ENCODE measurements at regions of chr20 and their contacts with region 1.

Region 1: DNA sequence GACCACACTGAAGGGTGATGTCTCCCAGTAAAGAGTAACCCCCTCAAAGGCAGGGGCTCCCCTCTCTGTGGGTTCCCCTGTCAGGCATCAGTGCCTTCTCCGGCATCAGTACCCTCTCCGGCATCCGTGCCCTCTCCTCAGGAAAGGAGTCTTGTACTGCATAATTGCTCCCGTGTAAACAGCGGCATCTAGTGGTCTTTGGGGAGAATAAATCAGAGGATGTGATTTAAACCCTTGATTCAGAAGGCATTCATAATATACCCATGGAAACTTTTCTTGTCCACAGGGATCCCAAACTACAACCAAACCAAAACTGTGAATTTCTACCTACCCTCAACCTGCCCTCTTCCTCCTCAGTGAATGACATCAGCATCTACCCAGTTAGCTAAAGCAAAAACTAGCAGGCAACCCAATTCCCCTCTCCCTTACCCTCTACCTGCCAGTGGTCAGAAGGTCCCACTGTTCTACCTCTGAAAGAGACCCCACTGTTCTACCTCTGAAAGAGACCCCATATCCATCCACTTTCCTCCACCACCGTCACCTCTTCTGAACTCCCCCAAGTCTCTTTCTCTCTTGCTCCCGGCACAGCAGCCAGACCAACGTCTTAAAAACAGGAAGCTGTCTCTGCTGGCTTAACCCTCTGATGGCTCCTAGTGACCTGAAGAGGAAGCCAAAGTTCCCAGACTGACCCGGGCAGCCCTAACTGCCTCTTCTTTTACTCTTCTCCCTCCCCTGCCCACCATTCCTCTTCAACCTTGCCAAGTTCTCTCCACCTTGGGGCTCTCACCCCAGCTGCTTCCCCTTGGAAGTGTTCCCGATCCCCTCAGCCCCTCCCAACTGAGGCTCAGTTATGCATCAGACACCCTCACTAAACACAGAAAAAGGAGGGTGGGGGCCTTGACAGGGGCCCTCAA is 27.2 kb downstream of the UBE2V1 start:
- DNase-seq: no peak
- H3K4me3 ChIP-seq: no peak overlapping the region
- H3K27me3 ChIP-seq: no peaks in the 10 kb centered on the region
- CTCF ChIP-seq: peak; percentile 84

Region 2: DNA sequence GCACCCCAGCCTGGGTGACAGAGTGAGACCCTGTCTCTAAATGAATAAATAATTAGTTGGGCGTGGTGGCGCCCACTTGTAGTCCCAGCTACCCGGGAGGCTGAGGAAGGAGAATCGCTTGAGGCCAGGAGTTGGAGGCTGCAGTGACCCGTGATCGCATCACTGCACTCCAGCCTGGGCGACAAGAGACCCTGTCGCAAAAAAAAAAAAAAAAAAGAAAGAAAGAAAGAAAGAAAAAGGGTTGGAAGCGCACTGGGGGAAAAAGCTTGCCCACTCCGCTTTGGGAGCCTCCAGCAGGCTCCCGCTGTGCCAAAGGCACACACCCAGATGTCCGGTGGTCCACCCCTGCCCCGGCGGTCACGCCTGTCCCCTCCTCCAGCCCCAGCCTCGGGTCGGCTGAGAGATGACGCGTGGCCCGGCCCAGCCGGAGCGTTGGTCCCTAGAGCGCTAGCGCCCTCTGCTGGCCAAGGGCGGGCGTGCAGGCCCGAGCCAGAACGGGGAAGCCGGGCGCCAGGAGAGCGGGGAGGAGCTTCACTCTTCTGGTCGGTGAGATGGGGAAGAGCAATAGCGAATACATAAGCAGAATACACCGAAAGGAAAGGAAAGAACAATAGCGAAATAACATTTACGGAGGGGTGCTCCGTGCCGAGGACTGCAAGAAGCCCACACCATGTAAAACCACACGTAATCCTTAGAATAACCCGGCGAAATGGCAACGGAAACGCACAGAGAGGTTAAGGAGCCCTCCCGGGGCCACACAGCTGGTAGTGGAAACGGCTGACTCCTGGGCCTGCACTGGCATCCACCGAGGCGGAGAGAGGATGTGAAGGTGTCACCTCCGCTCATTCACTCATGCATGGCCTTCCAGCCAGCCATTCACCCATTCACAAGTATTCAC is 14.5 kb before region 1 on chr20:
- CTCF ChIA-PET with region 1: interaction called, 43 read pairs
- POLR2A ChIA-PET with region 1: no interaction called
- DNase-seq: no peak
- H3K4me3 ChIP-seq: peak overlapping the region; percentile 30
- H3K27me3 ChIP-seq: no peaks in the 10 kb centered on the region
- CTCF ChIP-seq: peak; percentile 99

Region 3: DNA sequence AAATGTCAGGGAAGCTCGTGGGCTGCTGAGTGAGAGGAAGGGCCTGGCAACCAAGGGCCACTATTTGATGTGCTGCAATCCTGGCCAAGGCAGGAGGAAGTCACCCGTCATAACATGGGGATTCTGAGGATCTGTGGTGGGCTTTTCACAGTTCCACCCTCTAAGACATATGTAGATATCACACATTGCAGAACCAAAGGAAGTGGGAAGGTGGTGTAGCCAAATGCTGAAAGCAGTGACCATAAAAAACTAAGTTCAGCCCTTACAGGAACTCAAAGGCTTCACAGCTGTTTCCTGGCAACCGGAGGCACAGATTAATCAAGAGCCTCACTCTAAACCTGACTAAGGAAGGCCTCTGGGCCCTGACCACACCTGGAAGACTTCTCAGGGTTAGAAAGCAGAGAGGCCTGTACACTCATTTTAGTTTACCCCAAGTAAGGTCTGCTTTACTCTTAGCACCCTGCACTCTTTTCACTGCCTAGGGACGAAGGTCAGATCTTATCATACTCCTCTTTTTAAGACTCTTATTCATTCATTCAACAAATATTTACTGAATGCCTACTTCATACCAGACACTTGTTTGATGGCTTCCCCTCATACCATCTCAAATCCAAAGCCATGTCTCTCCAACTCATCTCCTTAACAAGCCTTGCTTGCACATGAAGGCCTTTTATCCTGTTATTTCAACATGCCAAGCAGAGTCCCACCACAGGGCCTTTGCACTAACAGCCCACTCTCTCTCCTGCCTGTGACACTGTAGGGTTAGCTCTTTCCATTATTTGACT is 24.6 kb after region 1 on chr20:
- CTCF ChIA-PET with region 1: interaction called, 12 read pairs
- POLR2A ChIA-PET with region 1: no interaction called
- DNase-seq: peak; percentile 33
- H3K4me3 ChIP-seq: no peak overlapping the region
- H3K27me3 ChIP-seq: no peaks in the 10 kb centered on the region
- CTCF ChIP-seq: no peak

Region 4: DNA sequence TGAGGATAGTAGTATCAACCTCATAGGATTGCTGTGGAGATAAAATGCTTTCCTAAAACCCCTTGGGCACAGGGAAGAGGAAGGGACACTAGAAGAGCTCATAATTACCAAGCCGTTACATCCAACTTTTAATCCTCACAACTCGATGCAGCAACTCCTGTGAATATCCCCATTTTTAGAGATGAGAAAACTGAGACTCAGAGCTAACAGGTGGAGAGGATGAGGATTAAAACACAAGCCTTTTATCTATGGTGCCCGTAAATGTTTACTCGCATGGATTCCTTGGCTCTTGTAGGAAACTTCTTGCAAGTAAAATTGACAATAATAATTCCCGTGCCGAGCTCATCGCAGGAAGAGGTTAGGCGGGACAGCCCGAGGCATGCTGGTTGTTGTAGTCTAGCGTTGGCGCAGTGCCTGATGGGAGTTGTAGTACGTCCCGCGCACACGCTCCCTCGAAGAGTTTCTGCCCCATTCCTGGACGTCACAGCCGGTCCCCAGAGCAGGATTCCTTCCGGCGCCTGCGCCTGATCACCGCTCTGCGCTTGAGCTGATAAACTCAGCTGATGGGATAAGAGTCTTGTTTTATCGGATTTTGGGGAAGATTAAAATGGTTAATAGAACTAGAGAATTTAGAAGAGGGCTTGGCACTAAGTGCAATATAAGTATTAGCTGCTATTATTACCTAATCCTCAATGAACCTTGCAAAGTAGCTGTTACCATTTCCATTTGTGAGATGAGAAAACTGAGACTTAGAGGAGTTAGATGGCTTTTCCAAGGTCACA is 30.1 kb after region 1 on chr20:
- CTCF ChIA-PET with region 1: interaction called, 12 read pairs
- POLR2A ChIA-PET with region 1: no interaction called
- DNase-seq: peak; percentile 82
- H3K4me3 ChIP-seq: peak overlapping the region; percentile 47
- H3K27me3 ChIP-seq: no peaks in the 10 kb centered on the region
- CTCF ChIP-seq: no peak

Region 5: DNA sequence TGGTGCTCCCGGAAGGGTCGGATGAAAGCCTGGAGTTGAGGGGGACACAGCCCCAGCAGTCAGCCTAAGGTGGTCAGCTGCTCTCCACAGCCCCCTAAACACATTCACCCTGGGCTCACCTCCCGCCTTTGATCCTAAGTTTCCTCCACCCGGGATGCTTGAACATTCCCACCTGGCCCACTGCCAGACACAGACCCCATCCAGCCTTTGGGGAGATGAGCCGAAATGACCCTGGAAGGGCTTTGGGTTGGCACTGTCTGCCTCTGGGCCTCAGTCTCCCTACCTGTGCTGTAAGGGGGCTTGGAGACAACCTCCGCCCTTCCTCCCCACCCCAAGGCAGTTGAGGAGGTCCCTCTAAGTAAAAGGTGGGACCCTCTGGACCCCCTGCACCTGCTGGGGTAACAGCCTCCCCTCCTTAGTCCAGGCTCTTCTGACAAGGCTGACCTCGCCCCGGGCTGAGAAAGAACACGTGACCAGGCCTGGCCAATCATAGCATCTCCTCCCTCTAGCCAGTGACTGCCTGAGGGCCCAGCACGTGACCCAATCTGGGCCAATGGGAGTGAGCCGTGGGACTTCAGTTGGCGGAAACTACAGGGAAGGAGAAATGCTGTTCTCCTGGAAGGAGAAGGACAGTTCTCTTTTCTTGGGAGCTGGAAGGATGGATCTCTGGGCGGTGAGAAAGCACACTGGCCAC is 44.1 kb after region 1 on chr20:
- CTCF ChIA-PET with region 1: no interaction called
- POLR2A ChIA-PET with region 1: no interaction called
- DNase-seq: no peak
- H3K4me3 ChIP-seq: no peak overlapping the region
- H3K27me3 ChIP-seq: no peaks in the 10 kb centered on the region
- CTCF ChIP-seq: no peak

Region 6: GRCh38 chr20:50625986-50626677 is 540.4 kb after region 1 on chr20:
- CTCF ChIA-PET with region 1: no interaction called
- POLR2A ChIA-PET with region 1: no interaction called
- DNase-seq: no peak
- H3K4me3 ChIP-seq: no peak overlapping the region
- H3K27me3 ChIP-seq: no peaks in the 10 kb centered on the region
- CTCF ChIP-seq: peak; percentile 82

Measured in BJ (cell line).